AG04450 (cell line): ENCODE measurements at regions of chr4 and their contacts with region 1.

Region 1: GRCh38 chr4:15457406-15458201 is 12.1 kb upstream of the CC2D2A start:
- DNase-seq: no peak
- H3K4me3 ChIP-seq: no peak overlapping the region
- H3K27ac ChIP-seq: no peak overlapping the region
- H3K27me3 ChIP-seq: no peaks in the 10 kb centered on the region
- CTCF ChIP-seq: peak; percentile 80

Region 2: DNA sequence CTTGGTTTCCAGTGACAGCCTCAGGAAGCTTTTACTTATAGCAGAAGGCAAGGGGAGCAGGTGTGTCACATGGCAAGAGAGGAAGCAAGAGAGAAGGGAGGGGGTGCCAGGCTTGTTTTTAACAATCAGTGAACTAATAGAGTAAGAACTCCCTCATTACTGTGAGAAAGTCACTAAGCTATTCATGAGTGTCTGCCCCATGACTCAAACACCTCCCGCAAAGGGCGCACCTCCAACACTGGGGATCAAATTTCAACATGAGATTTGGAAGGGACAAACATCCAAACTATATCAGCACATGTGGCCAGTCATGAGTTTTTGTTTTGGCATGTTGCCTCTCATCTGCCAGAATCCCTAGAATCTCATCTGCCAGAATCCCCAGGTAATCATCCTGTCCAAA is 213.2 kb before region 1 on chr4:
- CTCF ChIA-PET with region 1: interaction called, 191 read pairs
- POLR2A ChIA-PET with region 1: no interaction called
- DNase-seq: no peak
- H3K4me3 ChIP-seq: no peak overlapping the region
- H3K27ac ChIP-seq: peak overlapping the region; percentile 3
- H3K27me3 ChIP-seq: no peaks in the 10 kb centered on the region
- CTCF ChIP-seq: no peak

Region 3: GRCh38 chr4:15327311-15328298 is 130.0 kb before region 1 on chr4:
- CTCF ChIA-PET with region 1: interaction called, 20 read pairs
- POLR2A ChIA-PET with region 1: no interaction called
- DNase-seq: peak; percentile 92
- H3K4me3 ChIP-seq: peak overlapping the region; percentile 11; the same call in 1 of the 2 replicates
- H3K27ac ChIP-seq: peak overlapping the region; percentile 71
- H3K27me3 ChIP-seq: no peaks in the 10 kb centered on the region
- CTCF ChIP-seq: no peak

Region 4: GRCh38 chr4:15352524-15352923 is 105.1 kb before region 1 on chr4:
- CTCF ChIA-PET with region 1: interaction called, 18 read pairs
- POLR2A ChIA-PET with region 1: no interaction called
- DNase-seq: no peak
- H3K4me3 ChIP-seq: no peak overlapping the region
- H3K27ac ChIP-seq: no peak overlapping the region
- H3K27me3 ChIP-seq: peaks cover 2% of the 10 kb centered on the region
- CTCF ChIP-seq: no peak

Region 5: DNA sequence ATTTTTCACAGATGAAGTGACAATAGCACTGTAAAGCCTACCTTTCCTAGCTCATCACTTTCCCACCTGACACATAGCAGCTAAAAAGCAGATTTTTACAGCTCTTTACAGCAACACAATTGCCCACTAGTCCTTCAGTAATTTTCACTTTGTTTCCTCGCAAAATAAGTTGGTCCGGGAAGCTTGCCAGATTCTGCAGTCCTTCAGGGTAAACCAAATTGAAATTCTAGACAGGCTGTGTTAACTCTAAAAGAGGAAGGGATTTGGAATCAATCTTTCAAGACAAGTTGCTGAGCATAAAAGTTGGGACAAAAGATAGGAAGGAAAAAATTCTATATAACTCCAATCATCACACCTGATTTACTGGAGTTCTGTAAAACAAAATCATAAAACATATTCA is 21.1 kb before region 1 on chr4:
- CTCF ChIA-PET with region 1: interaction called, 10 read pairs
- POLR2A ChIA-PET with region 1: no interaction called
- DNase-seq: peak; percentile 46
- H3K4me3 ChIP-seq: no peak overlapping the region
- H3K27ac ChIP-seq: no peak overlapping the region
- H3K27me3 ChIP-seq: no peaks in the 10 kb centered on the region
- CTCF ChIP-seq: no peak

Region 6: DNA sequence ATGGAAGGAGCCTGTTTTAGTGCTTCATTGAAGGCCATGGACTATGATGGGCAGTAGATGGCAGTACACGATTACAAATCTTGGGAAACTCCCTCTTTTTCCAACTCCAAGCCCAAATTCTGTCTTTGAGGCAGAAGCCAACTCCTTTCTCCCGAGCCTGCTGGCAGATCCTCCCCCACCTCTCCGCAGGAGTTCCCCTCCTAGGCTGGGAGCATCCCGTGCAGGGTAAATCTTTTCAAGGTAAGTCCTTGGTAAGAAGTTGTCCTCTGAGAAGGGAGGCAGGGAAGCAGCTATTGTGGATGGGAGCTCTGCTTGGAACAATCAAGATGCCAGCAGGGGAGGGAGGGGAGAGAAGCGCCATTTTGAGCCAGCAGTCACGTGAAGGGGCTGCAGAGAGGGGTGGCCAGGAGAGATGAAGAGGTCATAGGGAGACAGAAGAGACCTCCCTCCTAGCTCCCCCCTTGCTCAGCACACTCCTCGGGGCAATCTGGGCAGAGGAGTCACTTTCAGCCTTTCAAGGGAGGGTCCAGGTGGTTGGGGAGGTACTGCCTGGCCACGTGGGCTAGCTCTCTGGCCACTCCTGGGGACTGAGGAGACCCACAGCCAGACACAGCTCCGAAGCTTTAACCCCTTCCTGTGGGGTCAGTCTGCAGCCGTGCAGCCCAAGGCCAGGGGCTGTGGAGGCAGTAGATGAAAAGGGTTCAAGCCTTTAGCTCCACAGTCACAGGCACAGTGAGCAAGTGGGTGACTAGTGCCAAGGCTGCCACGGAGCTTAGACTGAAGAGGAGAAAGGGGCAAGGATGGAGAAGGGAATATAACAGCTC is 21.7 kb after region 1 on chr4:
- CTCF ChIA-PET with region 1: interaction called, 10 read pairs
- POLR2A ChIA-PET with region 1: no interaction called
- DNase-seq: peak; percentile 70
- H3K4me3 ChIP-seq: peak overlapping the region; percentile 69
- H3K27ac ChIP-seq: peak overlapping the region; percentile 97
- H3K27me3 ChIP-seq: no peaks in the 10 kb centered on the region
- CTCF ChIP-seq: peak; percentile 84